ENCODE measurements at regions of chr9 and their contacts with region 1.

Region 1: DNA sequence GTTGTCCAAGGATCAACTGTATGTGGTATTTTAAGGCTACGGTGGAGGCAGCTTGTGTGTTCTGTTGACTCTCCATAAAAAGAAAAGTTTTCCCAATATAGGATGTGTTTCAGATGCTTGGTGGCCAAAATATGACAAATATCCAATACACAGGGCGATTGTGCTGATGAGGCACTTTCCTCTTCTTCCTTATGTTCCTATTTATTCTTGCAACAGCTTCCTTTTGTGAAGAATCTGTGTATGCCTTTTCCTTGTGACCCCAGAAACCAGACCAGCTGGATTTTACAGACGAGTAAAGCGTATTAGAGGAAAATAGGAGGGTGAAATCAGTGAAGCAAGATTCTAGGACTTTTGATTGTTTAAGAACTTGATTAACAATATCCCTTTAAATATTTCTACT is 452.0 kb downstream of the DMAC1 start:
- DNase-seq: no peak
- ATAC-seq: no peak
- H3K4me3 Mint-ChIP-seq: no peak overlapping the region
- H3K27ac Mint-ChIP-seq: no peak overlapping the region
- H3K4me1 Mint-ChIP-seq: no peaks in the 10 kb centered on the region
- H3K27me3 Mint-ChIP-seq: peaks cover 10% of the 10 kb centered on the region

Region 2: GRCh38 chr9:7382304-7382703 is 34.7 kb after region 1 on chr9:
- CTCF ChIA-PET with region 1: no interaction called
- POLR2A ChIA-PET with region 1: no interaction called
- intact Hi-C with region 1: loop called in 1 of 2 experiments (anchors 5 kb)
- DNase-seq: no peak
- ATAC-seq: no peak
- H3K4me3 Mint-ChIP-seq: no peak overlapping the region
- H3K27ac Mint-ChIP-seq: no peak overlapping the region
- H3K4me1 Mint-ChIP-seq: no peaks in the 10 kb centered on the region
- H3K27me3 Mint-ChIP-seq: peaks cover 7% of the 10 kb centered on the region

Region 3: GRCh38 chr9:7443541-7443940 is 96.0 kb after region 1 on chr9:
- CTCF ChIA-PET with region 1: no interaction called
- POLR2A ChIA-PET with region 1: no interaction called
- intact Hi-C with region 1: no loop called
- DNase-seq: no peak
- ATAC-seq: no peak
- H3K4me3 Mint-ChIP-seq: no peak overlapping the region
- H3K27ac Mint-ChIP-seq: no peak overlapping the region
- H3K4me1 Mint-ChIP-seq: no peaks in the 10 kb centered on the region
- H3K27me3 Mint-ChIP-seq: no peaks in the 10 kb centered on the region